PC-3 (cell line): ENCODE measurements at regions of chr3 and their contacts with region 1.

Region 1: GRCh38 chr3:18237251-18238005 is 187.7 kb downstream of the SATB1 start:
- DNase-seq: peak; percentile 91
- ATAC-seq: peak; percentile 91
- H3K4me3 ChIP-seq: peak overlapping the region; percentile 25; the same call in 1 of the 2 replicates
- H3K27ac ChIP-seq: peak overlapping the region; percentile 89
- H3K4me1 ChIP-seq: peaks cover 53% of the 10 kb centered on the region
- H3K27me3 ChIP-seq: no peaks in the 10 kb centered on the region
- CTCF ChIP-seq: no peak

Region 2: DNA sequence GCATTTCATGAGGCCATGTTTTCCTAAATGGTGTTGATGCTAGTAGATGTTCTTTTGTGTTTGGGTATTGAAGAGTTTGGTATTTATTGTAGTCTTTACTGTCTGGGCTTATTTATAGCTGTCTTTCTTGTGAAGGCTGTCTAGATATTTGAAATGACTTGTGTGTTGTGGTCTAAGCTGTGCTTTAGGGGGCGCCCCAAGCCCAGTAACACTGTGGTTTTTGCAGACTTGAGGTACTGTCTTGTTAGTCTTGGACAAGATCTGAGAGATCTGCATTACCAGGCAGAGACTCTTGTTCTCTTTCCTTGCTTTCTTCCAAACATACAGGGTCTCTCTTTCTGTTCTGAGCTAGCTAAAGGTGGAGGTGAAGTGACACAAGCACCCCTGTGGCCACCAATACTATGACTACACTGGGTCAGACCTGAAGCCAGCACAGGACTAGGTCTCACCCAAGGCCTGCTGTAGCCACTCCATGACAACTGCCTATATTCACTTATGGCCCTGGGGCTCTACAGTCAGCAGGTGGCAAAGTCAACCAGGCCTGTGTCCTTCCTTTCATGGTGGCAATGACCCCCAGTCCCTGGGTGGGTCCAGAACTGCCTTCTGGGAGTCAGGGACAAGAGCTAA is 342.9 kb before region 1 on chr3:
- CTCF ChIA-PET with region 1: no interaction called
- POLR2A ChIA-PET with region 1: no interaction called
- intact Hi-C with region 1: loop called (anchors 1 kb)
- DNase-seq: peak; percentile 73
- ATAC-seq: peak; percentile 85
- H3K4me3 ChIP-seq: no peak overlapping the region
- H3K27ac ChIP-seq: no peak overlapping the region
- H3K4me1 ChIP-seq: peaks cover 13% of the 10 kb centered on the region
- H3K27me3 ChIP-seq: no peaks in the 10 kb centered on the region
- CTCF ChIP-seq: peak; percentile 78

Region 3: GRCh38 chr3:17985658-17986347 is 251.6 kb before region 1 on chr3:
- CTCF ChIA-PET with region 1: no interaction called
- POLR2A ChIA-PET with region 1: no interaction called
- intact Hi-C with region 1: loop called (anchors 5 kb)
- DNase-seq: peak; percentile 40
- ATAC-seq: no peak; the same call in none of the 2 replicates
- H3K4me3 ChIP-seq: no peak overlapping the region
- H3K27ac ChIP-seq: no peak overlapping the region
- H3K4me1 ChIP-seq: peaks cover 7% of the 10 kb centered on the region; the same call in 1 of the 2 replicates
- H3K27me3 ChIP-seq: no peaks in the 10 kb centered on the region
- CTCF ChIP-seq: no peak

Region 4: DNA sequence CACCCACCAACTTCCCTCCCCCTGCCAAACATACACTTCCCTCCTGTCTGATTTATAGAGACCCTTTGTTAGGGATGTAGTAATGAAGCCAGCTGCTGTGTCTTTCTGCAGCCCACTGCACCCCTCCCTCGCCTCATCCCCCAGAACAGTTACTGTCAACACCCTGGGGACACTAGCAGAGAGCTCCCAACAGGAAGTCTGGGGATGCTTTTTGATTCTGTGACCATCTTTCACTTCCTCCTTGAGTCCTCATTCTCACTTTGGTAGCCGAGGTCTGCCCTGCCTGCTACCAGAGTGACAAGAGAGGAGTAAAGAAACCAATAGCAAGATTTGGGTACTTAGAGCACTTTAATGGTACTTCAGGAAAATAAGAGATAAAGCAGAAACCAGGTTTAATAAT is 13.9 kb before region 1 on chr3:
- CTCF ChIA-PET with region 1: no interaction called
- POLR2A ChIA-PET with region 1: interaction called, 15 read pairs
- intact Hi-C with region 1: no loop called
- DNase-seq: no peak
- ATAC-seq: no peak
- H3K4me3 ChIP-seq: no peak overlapping the region
- H3K27ac ChIP-seq: no peak overlapping the region
- H3K4me1 ChIP-seq: no peaks in the 10 kb centered on the region
- H3K27me3 ChIP-seq: no peaks in the 10 kb centered on the region
- CTCF ChIP-seq: no peak

Region 5: DNA sequence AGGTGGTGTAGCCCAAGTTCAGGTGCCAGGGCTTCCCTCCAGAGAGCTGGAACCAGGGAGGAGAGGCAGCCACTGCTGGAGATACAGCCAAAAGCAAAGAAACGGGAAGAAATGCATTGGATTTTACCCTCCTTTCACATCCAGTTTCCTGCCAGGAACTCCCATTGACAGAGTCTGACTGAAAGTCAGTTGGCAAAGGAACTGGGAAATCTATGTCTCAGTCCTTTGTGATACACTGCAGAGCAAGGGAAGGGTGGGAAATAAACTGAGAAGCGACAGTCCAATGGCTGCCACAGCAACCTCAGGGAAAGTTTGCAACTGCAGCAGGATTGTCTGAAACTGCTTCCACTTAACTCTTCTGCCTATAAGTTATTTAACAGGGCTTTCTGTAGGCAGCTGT is 45.1 kb after region 1 on chr3:
- CTCF ChIA-PET with region 1: no interaction called
- POLR2A ChIA-PET with region 1: no interaction called
- intact Hi-C with region 1: no loop called
- DNase-seq: no peak
- ATAC-seq: no peak
- H3K4me3 ChIP-seq: no peak overlapping the region
- H3K27ac ChIP-seq: no peak overlapping the region
- H3K4me1 ChIP-seq: no peaks in the 10 kb centered on the region
- H3K27me3 ChIP-seq: no peaks in the 10 kb centered on the region
- CTCF ChIP-seq: no peak

Region 6: GRCh38 chr3:18351069-18351628 is 113.7 kb after region 1 on chr3:
- CTCF ChIA-PET with region 1: no interaction called
- POLR2A ChIA-PET with region 1: no interaction called
- intact Hi-C with region 1: no loop called
- DNase-seq: no peak
- ATAC-seq: no peak
- H3K4me3 ChIP-seq: no peak overlapping the region
- H3K27ac ChIP-seq: no peak overlapping the region
- H3K4me1 ChIP-seq: 0 out of 2 replicates have a peak, but pooled peaks cover 5% of the 10 kb centered on the region
- H3K27me3 ChIP-seq: no peaks in the 10 kb centered on the region
- CTCF ChIP-seq: no peak